GM12878 (cell line): ENCODE measurements at regions of chr1 and their contacts with region 1.

Region 1: DNA sequence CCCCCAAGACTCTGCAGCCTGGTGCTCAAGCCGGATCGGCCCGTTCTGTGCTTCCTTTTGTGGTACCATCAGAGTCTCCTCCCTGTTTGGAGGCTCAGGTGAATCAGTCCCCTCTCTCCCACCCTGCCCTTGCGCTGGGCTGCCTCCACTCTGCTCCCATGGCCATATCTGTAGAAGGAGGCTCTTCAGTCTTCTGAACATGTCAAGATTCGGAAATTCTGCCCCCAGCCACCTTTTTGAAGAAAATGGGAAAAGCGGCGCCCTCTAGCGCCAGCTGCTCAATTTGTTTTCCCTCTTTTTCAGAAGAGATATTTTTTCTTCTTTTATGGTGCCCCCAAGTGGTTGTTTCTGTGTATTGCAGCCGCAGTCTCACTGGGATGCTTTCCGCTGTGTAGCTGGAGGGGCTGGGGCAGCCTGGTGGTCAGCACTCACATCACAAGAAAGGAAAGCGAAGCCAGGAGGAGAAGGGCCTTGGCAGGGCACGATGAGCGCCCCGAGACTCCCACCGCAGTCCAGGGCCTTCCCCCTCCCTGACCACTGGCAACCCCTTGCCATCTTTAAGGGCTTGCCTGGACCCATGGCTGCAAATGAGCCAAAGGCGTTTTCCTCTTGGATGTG is 58.4 kb upstream of the CACNA1E start:
- DNase-seq: no peak
- ATAC-seq: peak; percentile 71
- H3K4me3 ChIP-seq: no peak overlapping the region
- H3K27ac ChIP-seq: no peak overlapping the region
- H3K4me1 ChIP-seq: peaks cover 30% of the 10 kb centered on the region
- H3K27me3 ChIP-seq: no peaks in the 10 kb centered on the region; a peak in 2 of 4 replicates
- CTCF ChIP-seq: peak; percentile 87 to 100 (median 98)
- EP300 ChIP-seq: no peak
- POLR2A ChIP-seq: no peak
- RAD21 ChIP-seq: peak; percentile 91

Region 2: DNA sequence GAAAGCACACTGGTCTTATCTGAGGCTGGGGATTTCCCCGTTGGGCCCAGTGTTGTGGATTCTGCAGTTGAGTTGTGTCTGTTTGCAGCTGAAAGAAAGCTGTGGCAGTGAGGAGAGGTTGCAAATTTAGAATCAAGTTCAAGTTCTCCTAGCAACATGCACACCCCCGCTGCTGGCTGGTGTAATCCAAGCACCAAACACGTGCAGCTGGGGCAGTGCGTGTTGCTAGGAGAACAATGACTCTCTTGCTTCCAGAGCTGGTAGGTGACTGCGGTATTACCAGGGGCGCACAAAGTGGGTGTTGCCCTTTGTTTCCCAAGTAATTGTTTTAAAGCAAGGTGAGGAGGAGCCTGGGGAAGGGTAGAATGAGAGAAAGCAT is 244.9 kb before region 1 on chr1:
- CTCF ChIA-PET with region 1: interaction called, 91 read pairs
- POLR2A ChIA-PET with region 1: no interaction called
- RAD21 ChIA-PET with region 1: interaction called, 9 read pairs
- SMC1A ChIA-PET with region 1: interaction called, 5 read pairs
- in situ Hi-C with region 1: loop called (anchors 5 kb)
- intact Hi-C with region 1: no loop called
- DNase-seq: peak; percentile 4
- ATAC-seq: peak; percentile 74
- H3K4me3 ChIP-seq: no peak overlapping the region
- H3K27ac ChIP-seq: no peak overlapping the region
- H3K4me1 ChIP-seq: peaks cover 12% of the 10 kb centered on the region
- H3K27me3 ChIP-seq: no peaks in the 10 kb centered on the region; a peak in 1 of 4 replicates
- CTCF ChIP-seq: no peak
- EP300 ChIP-seq: no peak
- POLR2A ChIP-seq: no peak
- RAD21 ChIP-seq: no peak

Region 3: DNA sequence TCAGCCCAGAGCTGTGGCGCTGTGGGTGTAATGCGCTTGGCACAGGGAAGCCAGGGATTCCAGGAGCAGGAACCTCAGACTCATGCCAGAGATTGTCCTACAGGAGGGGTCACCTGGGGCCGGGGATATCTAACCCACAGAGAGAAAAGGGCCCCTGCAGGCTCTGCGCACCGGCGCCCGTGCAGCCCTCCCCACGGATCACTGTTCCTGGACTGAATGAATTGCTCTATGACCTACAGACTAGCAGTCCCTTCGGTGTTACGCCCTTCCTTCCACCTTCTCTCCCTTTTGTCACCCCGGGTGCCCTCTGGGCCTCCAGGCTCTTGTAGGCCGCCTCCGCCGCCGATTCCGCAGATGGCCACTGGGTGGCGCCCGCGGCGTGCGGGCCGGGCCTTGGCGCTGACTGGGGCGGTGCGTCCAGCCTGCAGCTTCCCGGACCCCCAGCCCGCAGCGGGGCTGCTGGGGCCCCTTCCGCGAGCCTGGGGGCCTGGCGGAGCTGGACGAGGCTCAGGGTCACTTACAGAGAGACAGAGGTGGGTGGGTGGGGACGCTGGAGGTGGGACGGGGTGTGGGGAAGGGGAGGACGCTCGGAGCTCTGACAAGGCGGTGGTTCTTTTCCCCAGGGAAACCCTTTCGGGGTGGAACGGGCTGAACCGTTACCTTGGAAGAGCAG is 235.1 kb before region 1 on chr1:
- CTCF ChIA-PET with region 1: interaction called, 91 read pairs
- POLR2A ChIA-PET with region 1: interaction called, 7 read pairs
- RAD21 ChIA-PET with region 1: interaction called, 33 read pairs
- SMC1A ChIA-PET with region 1: interaction called, 37 read pairs
- in situ Hi-C with region 1: loop called (anchors 5 kb)
- intact Hi-C with region 1: loop called (anchors 1 kb)
- DNase-seq: no peak
- ATAC-seq: peak; percentile 98
- H3K4me3 ChIP-seq: no peak overlapping the region
- H3K27ac ChIP-seq: no peak overlapping the region
- H3K4me1 ChIP-seq: no peaks in the 10 kb centered on the region
- H3K27me3 ChIP-seq: no peaks in the 10 kb centered on the region
- CTCF ChIP-seq: peak; percentile 95 to 98 (median 97)
- EP300 ChIP-seq: no peak
- POLR2A ChIP-seq: no peak
- RAD21 ChIP-seq: peak; percentile 99

Region 4: DNA sequence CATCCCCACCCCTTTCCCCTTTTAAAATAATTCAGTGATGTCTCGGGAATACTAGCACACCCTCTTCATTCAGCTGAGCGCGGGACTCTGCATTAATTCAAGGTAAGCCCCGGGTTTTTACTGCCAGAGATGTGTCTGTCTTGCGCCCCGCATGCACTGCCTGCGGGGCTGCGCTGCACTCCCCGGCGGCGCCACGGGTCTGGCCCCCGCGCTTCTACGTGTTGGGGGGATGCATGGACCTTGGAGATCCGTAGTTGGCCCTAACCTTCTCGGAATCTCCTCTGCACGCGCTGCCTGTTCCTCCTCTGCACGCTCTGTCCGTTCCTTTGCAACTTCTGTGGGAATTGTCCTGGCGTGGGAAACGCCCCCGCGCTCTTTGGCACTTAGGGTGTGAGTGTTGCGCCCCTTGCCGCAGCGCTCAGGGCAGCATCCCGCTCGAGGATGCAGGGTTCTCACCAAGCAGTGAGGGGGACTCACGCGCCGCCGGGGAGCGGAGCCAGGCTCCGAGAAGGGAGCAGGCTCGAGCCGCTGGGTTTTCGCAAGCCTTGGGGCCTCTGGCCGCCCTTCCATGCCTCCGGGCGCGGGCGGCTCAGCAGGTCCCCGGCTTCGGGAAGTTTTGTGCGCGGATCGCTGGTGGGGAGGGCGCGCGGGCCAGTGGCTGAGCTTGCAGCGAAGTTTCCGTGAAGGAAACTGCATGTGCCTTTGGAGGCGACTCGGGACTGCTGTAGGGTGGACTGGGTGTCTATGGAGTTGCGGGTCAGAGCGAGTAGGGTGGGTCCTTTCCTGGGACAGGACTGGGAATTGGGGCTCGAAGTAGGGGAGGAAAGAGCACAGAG is 106.7 kb before region 1 on chr1:
- CTCF ChIA-PET with region 1: no interaction called
- POLR2A ChIA-PET with region 1: no interaction called
- RAD21 ChIA-PET with region 1: no interaction called
- SMC1A ChIA-PET with region 1: no interaction called
- in situ Hi-C with region 1: no loop called
- intact Hi-C with region 1: loop called (anchors 5 kb)
- DNase-seq: no peak
- ATAC-seq: no peak; the same call in 2 of the 3 replicates
- H3K4me3 ChIP-seq: no peak overlapping the region
- H3K27ac ChIP-seq: no peak overlapping the region
- H3K4me1 ChIP-seq: no peaks in the 10 kb centered on the region
- H3K27me3 ChIP-seq: peaks cover 8 to 21% of the 10 kb centered on the region in 2 experiments
- CTCF ChIP-seq: no peak
- EP300 ChIP-seq: no peak
- POLR2A ChIP-seq: no peak
- RAD21 ChIP-seq: no peak

Region 5: GRCh38 chr1:181397845-181398244 is 27.1 kb before region 1 on chr1:
- CTCF ChIA-PET with region 1: interaction called, 14 read pairs
- POLR2A ChIA-PET with region 1: no interaction called
- RAD21 ChIA-PET with region 1: interaction called, 11 read pairs
- SMC1A ChIA-PET with region 1: interaction called, 15 read pairs
- in situ Hi-C with region 1: no loop called
- intact Hi-C with region 1: no loop called
- DNase-seq: peak; percentile 34
- ATAC-seq: peak; percentile 87
- H3K4me3 ChIP-seq: no peak overlapping the region
- H3K27ac ChIP-seq: no peak overlapping the region
- H3K4me1 ChIP-seq: peaks cover 20% of the 10 kb centered on the region
- H3K27me3 ChIP-seq: no peaks in the 10 kb centered on the region
- CTCF ChIP-seq: no peak
- EP300 ChIP-seq: no peak
- POLR2A ChIP-seq: no peak
- RAD21 ChIP-seq: no peak

Region 6: GRCh38 chr1:181404885-181405284 is 20.0 kb before region 1 on chr1:
- CTCF ChIA-PET with region 1: interaction called, 14 read pairs
- POLR2A ChIA-PET with region 1: no interaction called
- RAD21 ChIA-PET with region 1: interaction called, 5 read pairs
- SMC1A ChIA-PET with region 1: interaction called, 14 read pairs
- in situ Hi-C with region 1: no loop called
- intact Hi-C with region 1: no loop called
- DNase-seq: no peak
- ATAC-seq: no peak
- H3K4me3 ChIP-seq: no peak overlapping the region
- H3K27ac ChIP-seq: no peak overlapping the region
- H3K4me1 ChIP-seq: peaks cover 8% of the 10 kb centered on the region
- H3K27me3 ChIP-seq: no peaks in the 10 kb centered on the region
- CTCF ChIP-seq: no peak
- EP300 ChIP-seq: no peak
- POLR2A ChIP-seq: no peak
- RAD21 ChIP-seq: no peak

Region 7: DNA sequence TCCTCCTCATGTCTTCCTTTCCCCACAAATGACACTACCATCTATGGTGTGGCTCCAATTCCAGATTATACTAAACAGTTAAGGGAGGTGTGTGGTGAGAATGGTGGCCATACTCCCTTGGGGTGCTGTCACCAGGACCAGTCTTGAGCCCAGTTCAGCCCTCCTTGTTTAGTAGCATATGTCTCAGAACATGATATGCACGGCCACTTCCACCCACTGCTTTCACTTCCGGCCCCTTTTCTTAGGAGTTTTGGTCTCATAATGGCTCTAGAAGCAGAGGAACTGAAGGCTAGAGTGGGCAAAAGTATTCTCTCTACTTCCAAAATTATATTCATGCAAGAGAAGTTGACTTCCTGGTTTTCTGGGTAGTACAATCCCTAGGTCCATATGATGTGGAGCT is 13.1 kb after region 1 on chr1:
- CTCF ChIA-PET with region 1: interaction called, 43 read pairs
- POLR2A ChIA-PET with region 1: interaction called, 15 read pairs
- RAD21 ChIA-PET with region 1: interaction called, 12 read pairs
- SMC1A ChIA-PET with region 1: interaction called, 9 read pairs
- in situ Hi-C with region 1: no loop called
- intact Hi-C with region 1: no loop called
- DNase-seq: no peak
- ATAC-seq: peak; percentile 78
- H3K4me3 ChIP-seq: no peak overlapping the region
- H3K27ac ChIP-seq: peak overlapping the region; percentile 15; the same call in 1 of the 2 replicates
- H3K4me1 ChIP-seq: peaks cover 18% of the 10 kb centered on the region
- H3K27me3 ChIP-seq: no peaks in the 10 kb centered on the region
- CTCF ChIP-seq: no peak
- EP300 ChIP-seq: 0 out of 4 replicates have a peak, but pooled peaks of 1 of the 2 experiments have one; percentile 16
- POLR2A ChIP-seq: no peak
- RAD21 ChIP-seq: peak; percentile 16; the same call in 1 of the 2 replicates

Region 8: GRCh38 chr1:181587870-181588438 is 163.1 kb after region 1 on chr1:
- CTCF ChIA-PET with region 1: no interaction called
- POLR2A ChIA-PET with region 1: no interaction called
- RAD21 ChIA-PET with region 1: no interaction called
- SMC1A ChIA-PET with region 1: no interaction called
- in situ Hi-C with region 1: no loop called
- intact Hi-C with region 1: no loop called
- DNase-seq: no peak
- ATAC-seq: peak; percentile 70
- H3K4me3 ChIP-seq: no peak overlapping the region
- H3K27ac ChIP-seq: no peak overlapping the region
- H3K4me1 ChIP-seq: no peaks in the 10 kb centered on the region
- H3K27me3 ChIP-seq: no peaks in the 10 kb centered on the region
- CTCF ChIP-seq: peak in 1 of 3 experiments; percentile 40; a peak in 2 of 6 replicates
- EP300 ChIP-seq: no peak
- POLR2A ChIP-seq: no peak
- RAD21 ChIP-seq: peak; percentile 25; the same call in 1 of the 2 replicates